Activated CD8-positive, alpha-beta memory T cell treated with anti-CD3 and anti-CD28 coated beads, Interleukin-2, amount 10 ng/mL, durations not matched to agents 7 days and 5 days (primary cell): ENCODE measurements at regions of chr9 and their contacts with region 1.

Region 1: GRCh38 chr9:125241000-125241862 is at the start of gene HSPA5:
- DNase-seq: peak; percentile 100
- ATAC-seq: peak; percentile 89
- H3K4me3 Mint-ChIP-seq: peak within 1 kb of the TSS; percentile 94
- H3K27ac Mint-ChIP-seq: peak within 1 kb of the TSS; percentile 99
- H3K4me1 Mint-ChIP-seq: peaks cover 38% of the 10 kb centered on the region
- H3K27me3 Mint-ChIP-seq: no peaks in the 10 kb centered on the region
- total RNA-seq, gene HSPA5: 116 to 185 TPM

Region 2: GRCh38 chr9:125255781-125256391 is 14.7 kb after region 1 on chr9:
- CTCF ChIA-PET with region 1: interaction called, 29 read pairs
- DNase-seq: no peak
- ATAC-seq: peak; percentile 47
- H3K4me3 Mint-ChIP-seq: no peak overlapping the region
- H3K27ac Mint-ChIP-seq: no peak overlapping the region
- H3K4me1 Mint-ChIP-seq: peaks cover 5% of the 10 kb centered on the region
- H3K27me3 Mint-ChIP-seq: no peaks in the 10 kb centered on the region

Region 3: GRCh38 chr9:125261501-125262293 is 20.5 kb after region 1 on chr9 and contains the start of gene GAPVD1:
- CTCF ChIA-PET with region 1: interaction called, 29 read pairs
- DNase-seq: peak; percentile 93
- ATAC-seq: peak; percentile 98
- H3K4me3 Mint-ChIP-seq: peak within 1 kb of the TSS; percentile 97
- H3K27ac Mint-ChIP-seq: peak within 1 kb of the TSS; percentile 95
- H3K4me1 Mint-ChIP-seq: peaks cover 39% of the 10 kb centered on the region
- H3K27me3 Mint-ChIP-seq: no peaks in the 10 kb centered on the region
- total RNA-seq, gene GAPVD1: 53.4 to 54.2 TPM